IMR-90 (cell line): ENCODE measurements at regions of chr2 and their contacts with region 1.

Region 1: GRCh38 chr2:102442967-102443828 is 20.2 kb downstream of the IL18RAP start:
- DNase-seq: peak; percentile 39
- ATAC-seq: peak; percentile 83
- H3K4me3 ChIP-seq: no peak overlapping the region
- H3K27ac ChIP-seq: no peak overlapping the region
- H3K4me1 ChIP-seq: 0 out of 2 replicates have a peak, but pooled peaks cover 2% of the 10 kb centered on the region
- H3K27me3 ChIP-seq: peaks cover 3% of the 10 kb centered on the region; the same call in 1 of the 2 replicates
- CTCF ChIP-seq: peak; percentile 77
- POLR2A ChIP-seq: no peak
- RAD21 ChIP-seq: peak; percentile 78

Region 2: DNA sequence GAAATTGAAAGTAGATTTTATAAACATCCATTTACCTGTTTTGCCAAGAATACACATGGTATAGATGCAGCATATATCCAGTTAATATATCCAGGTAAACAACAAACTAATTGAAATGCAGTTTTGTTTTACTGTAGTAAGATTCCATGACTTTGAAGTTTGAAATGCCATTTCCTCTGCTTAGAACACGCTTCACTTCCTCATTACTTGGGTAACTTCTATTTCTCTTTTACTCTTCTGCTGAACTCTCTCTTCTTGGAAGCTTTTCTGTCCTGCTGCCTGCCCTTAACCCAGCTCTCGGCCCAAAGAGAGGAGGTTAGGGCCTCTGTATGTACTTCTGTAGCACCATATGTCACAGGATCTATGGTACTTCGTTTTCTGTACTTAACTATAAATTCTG is 270.5 kb before region 1 on chr2:
- CTCF ChIA-PET with region 1: no interaction called
- POLR2A ChIA-PET with region 1: no interaction called
- dilution Hi-C with region 1: no loop called
- in situ Hi-C with region 1: loop called (anchors 10 kb)
- intact Hi-C with region 1: no loop called
- DNase-seq: no peak
- ATAC-seq: no peak
- H3K4me3 ChIP-seq: no peak overlapping the region
- H3K27ac ChIP-seq: no peak overlapping the region
- H3K4me1 ChIP-seq: no peaks in the 10 kb centered on the region
- H3K27me3 ChIP-seq: no peaks in the 10 kb centered on the region
- CTCF ChIP-seq: no peak
- POLR2A ChIP-seq: no peak
- RAD21 ChIP-seq: no peak

Region 3: DNA sequence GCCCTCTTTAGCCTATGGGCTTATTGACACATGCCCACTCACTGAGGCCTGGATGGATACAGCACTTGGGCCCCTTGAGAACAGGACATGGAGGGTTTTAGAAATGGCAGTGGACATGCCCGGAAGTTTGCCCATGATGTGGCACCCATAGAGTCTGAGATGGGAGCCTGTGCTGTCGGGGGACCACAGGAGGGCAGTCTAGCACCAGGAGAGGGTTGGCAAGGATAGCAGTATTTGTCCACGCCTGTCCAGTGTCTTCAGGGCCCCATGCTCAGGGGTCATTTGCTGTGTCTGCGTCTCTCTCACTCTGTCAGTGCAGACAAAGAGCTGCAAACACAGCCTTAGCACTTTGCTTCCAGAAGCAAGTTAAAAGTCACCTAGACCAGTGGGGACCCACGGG is 207.7 kb before region 1 on chr2:
- CTCF ChIA-PET with region 1: interaction called, 4 read pairs
- POLR2A ChIA-PET with region 1: no interaction called
- dilution Hi-C with region 1: no loop called
- in situ Hi-C with region 1: loop called (anchors 5 kb)
- intact Hi-C with region 1: loop called (anchors 1 kb)
- DNase-seq: peak; percentile 29
- ATAC-seq: peak; percentile 62
- H3K4me3 ChIP-seq: no peak overlapping the region
- H3K27ac ChIP-seq: no peak overlapping the region
- H3K4me1 ChIP-seq: peaks cover 7% of the 10 kb centered on the region
- H3K27me3 ChIP-seq: no peaks in the 10 kb centered on the region
- CTCF ChIP-seq: peak; percentile 55
- POLR2A ChIP-seq: no peak
- RAD21 ChIP-seq: peak; percentile 72

Region 4: GRCh38 chr2:102251042-102251848 is 192.0 kb before region 1 on chr2:
- CTCF ChIA-PET with region 1: interaction called, 4 read pairs
- POLR2A ChIA-PET with region 1: no interaction called
- dilution Hi-C with region 1: no loop called
- in situ Hi-C with region 1: no loop called
- intact Hi-C with region 1: loop called (anchors 1 kb)
- DNase-seq: no peak
- ATAC-seq: peak; percentile 76
- H3K4me3 ChIP-seq: peak overlapping the region; percentile 40
- H3K27ac ChIP-seq: no peak overlapping the region
- H3K4me1 ChIP-seq: no peaks in the 10 kb centered on the region
- H3K27me3 ChIP-seq: peaks cover 4% of the 10 kb centered on the region; the same call in 1 of the 2 replicates
- CTCF ChIP-seq: no peak
- POLR2A ChIP-seq: no peak
- RAD21 ChIP-seq: no peak

Region 5: GRCh38 chr2:102355526-102356380 is 87.4 kb before region 1 on chr2 and contains the start of gene IL18R1:
- CTCF ChIA-PET with region 1: interaction called, 5 read pairs
- POLR2A ChIA-PET with region 1: no interaction called
- dilution Hi-C with region 1: no loop called
- in situ Hi-C with region 1: no loop called
- intact Hi-C with region 1: loop called (anchors 1 kb)
- DNase-seq: peak; percentile 69
- ATAC-seq: peak; percentile 100
- H3K4me3 ChIP-seq: peak within 1 kb of the TSS; percentile 83
- H3K27ac ChIP-seq: peak within 1 kb of the TSS; percentile 65; the same call in 1 of the 2 replicates
- H3K4me1 ChIP-seq: peaks cover 2% of the 10 kb centered on the region; the same call in 1 of the 2 replicates
- H3K27me3 ChIP-seq: 0 out of 2 replicates have a peak, but pooled peaks cover 2% of the 10 kb centered on the region
- CTCF ChIP-seq: peak; percentile 90
- POLR2A ChIP-seq: no peak; the same call in 1 of the 2 replicates
- RAD21 ChIP-seq: peak; percentile 88
- total RNA-seq, gene IL18R1: 0.18 and 0.28 TPM in 2 replicates

Region 6: GRCh38 chr2:102410952-102411351 is 32.2 kb before region 1 on chr2:
- CTCF ChIA-PET with region 1: no interaction called
- POLR2A ChIA-PET with region 1: no interaction called
- dilution Hi-C with region 1: no loop called
- in situ Hi-C with region 1: no loop called
- intact Hi-C with region 1: no loop called
- DNase-seq: no peak
- ATAC-seq: no peak
- H3K4me3 ChIP-seq: no peak overlapping the region
- H3K27ac ChIP-seq: no peak overlapping the region
- H3K4me1 ChIP-seq: no peaks in the 10 kb centered on the region
- H3K27me3 ChIP-seq: peaks cover 2% of the 10 kb centered on the region; the same call in 1 of the 2 replicates
- CTCF ChIP-seq: no peak
- POLR2A ChIP-seq: no peak
- RAD21 ChIP-seq: no peak